IMR-90 (cell line): ENCODE measurements at regions of chr5 and their contacts with region 1.

Region 1: DNA sequence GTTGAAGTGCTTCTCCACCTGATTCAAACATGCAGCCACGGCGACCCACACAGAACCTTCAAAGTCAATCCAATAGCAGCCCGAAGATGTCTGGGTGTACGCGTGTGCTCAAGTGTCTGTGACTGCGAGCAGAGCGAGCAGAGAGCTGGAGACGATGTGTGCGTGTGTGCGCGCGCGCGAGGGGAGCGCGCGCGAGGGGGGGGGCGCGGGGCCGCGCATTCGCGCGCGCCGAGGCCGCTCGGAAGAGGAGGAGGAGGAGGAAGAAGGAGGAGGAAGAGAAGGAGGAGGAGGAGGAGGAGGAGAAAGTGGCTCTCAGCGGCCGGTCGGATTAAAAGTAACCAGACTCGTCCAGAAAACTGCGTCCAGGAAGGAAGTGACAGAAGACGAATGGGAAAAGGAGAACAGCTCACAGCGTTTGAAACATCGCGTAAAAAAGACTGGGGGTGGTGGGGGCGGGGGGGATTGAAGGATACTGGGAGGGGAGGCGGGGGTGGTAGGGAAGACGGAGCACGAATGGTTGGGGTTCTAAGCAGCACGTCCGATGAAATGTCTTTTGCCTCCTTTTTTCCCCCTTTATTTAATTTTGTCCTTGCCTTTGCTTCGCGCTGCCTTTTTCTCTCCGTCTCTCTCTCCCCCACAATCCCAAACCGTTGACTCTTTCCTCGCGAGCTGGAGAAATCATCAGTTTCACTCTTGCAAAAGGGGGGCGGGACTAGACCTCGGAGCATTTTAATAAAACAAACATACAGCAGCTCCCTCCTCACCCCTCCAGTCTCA is at the start of gene MEF2C:
- DNase-seq: peak; percentile 81
- ATAC-seq: peak; percentile 79
- H3K4me3 ChIP-seq: peak within 1 kb of the TSS; percentile 61
- H3K27ac ChIP-seq: peak within 1 kb of the TSS; percentile 79
- H3K4me1 ChIP-seq: 0 out of 2 replicates have a peak, but pooled peaks cover 3% of the 10 kb centered on the region
- H3K27me3 ChIP-seq: no peaks in the 10 kb centered on the region
- CTCF ChIP-seq: no peak
- POLR2A ChIP-seq: peak; percentile 70; the same call in 1 of the 2 replicates
- RAD21 ChIP-seq: peak; percentile 21
- total RNA-seq, gene MEF2C: 6.8 and 9.4 TPM in 2 replicates

Region 2: GRCh38 chr5:88785391-88786219 is 97.6 kb before region 1 on chr5:
- CTCF ChIA-PET with region 1: no interaction called
- POLR2A ChIA-PET with region 1: no interaction called
- dilution Hi-C with region 1: no loop called
- in situ Hi-C with region 1: no loop called
- intact Hi-C with region 1: loop called (anchors 2 kb)
- DNase-seq: peak; percentile 93
- ATAC-seq: peak; percentile 94
- H3K4me3 ChIP-seq: peak overlapping the region; percentile 7; the same call in 1 of the 2 replicates
- H3K27ac ChIP-seq: no peak overlapping the region
- H3K4me1 ChIP-seq: peaks cover 6% of the 10 kb centered on the region; the same call in 1 of the 2 replicates
- H3K27me3 ChIP-seq: no peaks in the 10 kb centered on the region
- CTCF ChIP-seq: no peak
- POLR2A ChIP-seq: peak; percentile 46; the same call in 1 of the 2 replicates
- RAD21 ChIP-seq: no peak

Region 3: DNA sequence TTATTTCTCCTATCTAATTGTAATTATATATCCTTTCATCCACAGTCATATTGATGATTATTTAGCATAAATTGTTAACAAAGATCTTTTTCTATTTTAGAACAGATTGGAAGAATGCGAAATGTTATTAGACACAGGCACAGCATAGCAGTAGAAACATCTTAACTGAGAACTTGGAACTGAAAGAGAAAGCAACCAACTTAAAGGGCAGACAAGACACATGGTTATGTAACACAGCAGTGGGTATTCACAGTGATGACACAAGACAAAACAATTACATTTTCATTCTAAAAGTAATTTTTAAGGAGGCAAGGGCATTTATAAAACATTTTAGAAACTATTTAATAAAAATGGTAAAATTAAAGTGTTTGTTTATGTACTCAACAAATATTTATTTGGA is 57.5 kb after region 1 on chr5:
- CTCF ChIA-PET with region 1: no interaction called
- POLR2A ChIA-PET with region 1: no interaction called
- dilution Hi-C with region 1: no loop called
- in situ Hi-C with region 1: loop called (anchors 10 kb)
- intact Hi-C with region 1: loop called (anchors 1 kb)
- DNase-seq: no peak
- ATAC-seq: no peak
- H3K4me3 ChIP-seq: no peak overlapping the region
- H3K27ac ChIP-seq: no peak overlapping the region
- H3K4me1 ChIP-seq: peaks cover 17% of the 10 kb centered on the region
- H3K27me3 ChIP-seq: no peaks in the 10 kb centered on the region
- CTCF ChIP-seq: no peak
- POLR2A ChIP-seq: no peak
- RAD21 ChIP-seq: no peak

Region 4: GRCh38 chr5:89213573-89213972 is 330.3 kb after region 1 on chr5:
- CTCF ChIA-PET with region 1: no interaction called
- POLR2A ChIA-PET with region 1: no interaction called
- dilution Hi-C with region 1: no loop called
- in situ Hi-C with region 1: no loop called
- intact Hi-C with region 1: loop called (anchors 10 kb)
- DNase-seq: peak; percentile 60
- ATAC-seq: no peak
- H3K4me3 ChIP-seq: no peak overlapping the region
- H3K27ac ChIP-seq: no peak overlapping the region
- H3K4me1 ChIP-seq: no peaks in the 10 kb centered on the region; the same call in 1 of the 2 replicates
- H3K27me3 ChIP-seq: no peaks in the 10 kb centered on the region
- CTCF ChIP-seq: no peak
- POLR2A ChIP-seq: no peak
- RAD21 ChIP-seq: no peak

Region 5: GRCh38 chr5:90264689-90265544 is 1381.7 kb after region 1 on chr5:
- CTCF ChIA-PET with region 1: no interaction called
- POLR2A ChIA-PET with region 1: no interaction called
- dilution Hi-C with region 1: no loop called
- in situ Hi-C with region 1: no loop called
- intact Hi-C with region 1: loop called (anchors 5 kb)
- DNase-seq: peak; percentile 61
- ATAC-seq: peak; percentile 83
- H3K4me3 ChIP-seq: no peak overlapping the region
- H3K27ac ChIP-seq: no peak overlapping the region
- H3K4me1 ChIP-seq: no peaks in the 10 kb centered on the region
- H3K27me3 ChIP-seq: no peaks in the 10 kb centered on the region
- CTCF ChIP-seq: peak; percentile 98
- POLR2A ChIP-seq: 0 out of 2 replicates have a peak, but pooled peaks have one; percentile 29
- RAD21 ChIP-seq: peak; percentile 90